Endothelial cell of umbilical vein (primary cell): ENCODE measurements at regions of chr3 and their contacts with region 1.

Region 1: DNA sequence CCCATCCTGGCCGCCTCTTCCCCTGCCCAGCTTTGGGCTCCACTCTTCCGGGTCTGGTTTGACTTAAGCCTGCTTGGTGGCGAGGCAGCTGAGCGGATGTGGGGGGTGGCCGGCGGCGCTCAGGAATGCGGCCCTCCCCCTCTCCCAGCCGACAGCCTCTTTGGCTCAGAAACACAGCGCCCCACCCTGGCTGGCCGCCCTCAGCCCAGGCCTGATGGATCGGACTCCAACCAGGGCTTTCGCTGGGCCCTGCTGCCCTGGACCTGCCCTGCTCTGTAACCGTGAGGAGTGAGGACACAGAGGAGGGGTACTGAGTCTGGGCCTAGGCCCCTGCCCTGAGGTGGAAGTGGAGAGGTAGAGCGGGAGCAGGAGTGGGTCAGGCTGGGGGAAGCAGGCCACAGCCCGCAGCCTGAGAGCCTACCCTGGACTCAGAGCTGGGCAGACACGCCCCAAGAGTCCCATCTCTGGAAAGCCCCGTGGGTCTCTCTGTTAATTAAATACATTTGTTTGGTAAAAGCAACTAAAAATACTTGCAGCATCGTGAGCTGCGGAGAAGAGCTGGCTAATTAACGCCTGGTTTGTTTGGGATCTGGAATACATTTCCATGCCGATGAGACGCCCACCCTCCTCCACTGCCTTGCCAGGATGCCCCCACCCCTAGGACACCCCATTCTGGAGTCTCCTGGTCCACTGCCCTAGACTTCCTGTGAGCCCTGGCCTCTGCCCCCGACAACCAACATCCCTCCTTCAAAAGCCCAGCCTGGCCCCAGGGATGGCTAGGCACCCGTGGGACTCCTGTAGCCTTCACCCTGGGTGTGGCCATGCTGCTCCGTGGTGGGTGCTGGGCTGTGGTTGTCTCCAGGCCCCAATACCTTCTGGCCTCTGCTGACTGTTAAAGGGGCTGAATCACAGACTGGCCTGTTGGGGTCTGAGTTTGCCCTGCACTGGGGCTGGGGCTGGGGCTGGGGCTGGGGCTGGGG is 19.6 kb downstream of the PLXNA1 start:
- DNase-seq: peak; percentile 83
- H3K4me3 ChIP-seq: no peak overlapping the region
- H3K27ac ChIP-seq: peak overlapping the region; percentile 50
- H3K4me1 ChIP-seq: peaks cover 11% of the 10 kb centered on the region
- H3K27me3 ChIP-seq: no peaks in the 10 kb centered on the region
- CTCF ChIP-seq: peak; percentile 74 to 82
- POLR2A ChIP-seq: peak; percentile 32

Region 2: DNA sequence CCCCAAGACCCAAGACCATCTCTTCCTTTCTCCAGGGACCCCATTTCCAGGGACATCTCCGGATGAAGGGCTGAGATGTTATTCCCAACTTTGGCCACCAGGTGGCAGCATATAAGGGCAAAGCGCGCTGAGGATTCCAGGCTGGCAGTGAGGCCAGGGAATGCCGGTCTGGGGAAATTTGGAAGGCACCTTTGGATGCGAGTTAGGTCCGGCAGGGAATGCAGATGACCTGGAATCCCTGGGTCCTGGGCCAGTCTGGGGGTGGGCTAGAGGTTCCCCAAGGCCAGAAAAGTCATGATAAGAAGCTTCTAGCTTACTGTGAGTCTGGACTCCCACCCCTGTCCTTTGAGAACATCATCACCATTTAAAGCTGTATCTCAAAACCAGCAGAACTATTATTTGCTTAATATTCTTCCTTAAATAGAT is 480.1 kb before region 1 on chr3:
- CTCF ChIA-PET with region 1: no interaction called
- POLR2A ChIA-PET with region 1: no interaction called
- dilution Hi-C with region 1: no loop called
- intact Hi-C with region 1: loop called (anchors 10 kb)
- DNase-seq: peak; percentile 43
- H3K4me3 ChIP-seq: no peak overlapping the region
- H3K27ac ChIP-seq: no peak overlapping the region
- H3K4me1 ChIP-seq: no peaks in the 10 kb centered on the region
- H3K27me3 ChIP-seq: peaks cover 13 to 17% of the 10 kb centered on the region in 2 experiments
- CTCF ChIP-seq: peak; percentile 67 to 78
- POLR2A ChIP-seq: no peak

Region 3: DNA sequence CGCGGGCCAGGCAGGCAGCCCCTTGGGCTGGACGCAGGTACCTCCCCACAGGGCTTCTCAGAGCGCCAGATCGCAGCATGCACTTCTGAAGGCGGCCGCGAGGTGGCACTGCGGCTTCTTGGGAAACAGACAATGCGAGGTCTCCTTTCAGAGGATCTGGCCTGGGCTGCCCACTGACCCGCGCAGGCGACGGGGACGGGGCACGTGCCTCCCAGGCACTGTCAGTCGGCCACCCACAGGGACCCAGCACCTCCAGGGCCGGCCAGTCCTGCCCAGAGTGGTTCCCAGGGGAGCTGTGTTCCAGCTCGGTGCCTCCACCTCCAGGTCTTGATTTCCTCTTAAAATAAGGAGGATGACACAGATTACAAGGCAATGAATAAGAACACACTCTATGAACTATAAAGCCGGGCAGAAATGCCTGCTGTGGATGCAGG is 323.1 kb before region 1 on chr3:
- CTCF ChIA-PET with region 1: interaction called, 6 read pairs
- POLR2A ChIA-PET with region 1: no interaction called
- dilution Hi-C with region 1: no loop called
- intact Hi-C with region 1: loop called (anchors 5 kb)
- DNase-seq: peak; percentile 76
- H3K4me3 ChIP-seq: no peak overlapping the region
- H3K27ac ChIP-seq: no peak overlapping the region
- H3K4me1 ChIP-seq: no peaks in the 10 kb centered on the region
- H3K27me3 ChIP-seq: peaks cover 6 to 26% of the 10 kb centered on the region in 2 experiments
- CTCF ChIP-seq: peak; percentile 91 to 97
- POLR2A ChIP-seq: no peak

Region 4: GRCh38 chr3:127016043-127016860 is 13.8 kb after region 1 on chr3:
- CTCF ChIA-PET with region 1: no interaction called
- POLR2A ChIA-PET with region 1: no interaction called
- dilution Hi-C with region 1: no loop called
- intact Hi-C with region 1: no loop called
- DNase-seq: no peak
- H3K4me3 ChIP-seq: no peak overlapping the region
- H3K27ac ChIP-seq: no peak overlapping the region
- H3K4me1 ChIP-seq: no peaks in the 10 kb centered on the region
- H3K27me3 ChIP-seq: no peaks in the 10 kb centered on the region
- CTCF ChIP-seq: no peak
- POLR2A ChIP-seq: no peak